Aorta (tissue), 5 donors: ENCODE measurements at regions of chr7 and their contacts with region 1.

Region 1: DNA sequence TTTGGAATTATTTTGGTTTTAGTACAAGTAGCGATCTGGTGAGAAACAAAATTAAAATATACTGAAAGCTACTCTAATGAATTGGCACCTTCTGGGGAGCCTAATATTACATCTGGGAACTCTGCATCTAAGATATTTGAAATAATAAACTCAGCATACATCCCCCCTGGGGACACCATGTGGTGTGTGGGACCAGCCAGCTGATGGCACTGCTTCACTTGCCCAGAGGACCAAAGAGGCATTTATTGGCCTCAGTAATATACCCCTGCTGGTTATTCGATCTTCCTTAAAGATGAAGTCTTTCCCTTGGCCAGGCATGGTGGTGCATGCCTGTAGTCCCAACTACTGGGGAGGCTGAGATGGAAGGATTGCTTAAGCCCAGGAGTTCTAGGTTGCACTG is 195.1 kb upstream of the AUTS2 start:
- DNase-seq: no peak
- ATAC-seq: no peak
- H3K4me3 ChIP-seq: no peak overlapping the region
- H3K27ac ChIP-seq: no peak overlapping the region
- H3K4me1 ChIP-seq: no peaks in the 10 kb centered on the region
- H3K27me3 ChIP-seq: no peaks in the 10 kb centered on the region

Region 2: DNA sequence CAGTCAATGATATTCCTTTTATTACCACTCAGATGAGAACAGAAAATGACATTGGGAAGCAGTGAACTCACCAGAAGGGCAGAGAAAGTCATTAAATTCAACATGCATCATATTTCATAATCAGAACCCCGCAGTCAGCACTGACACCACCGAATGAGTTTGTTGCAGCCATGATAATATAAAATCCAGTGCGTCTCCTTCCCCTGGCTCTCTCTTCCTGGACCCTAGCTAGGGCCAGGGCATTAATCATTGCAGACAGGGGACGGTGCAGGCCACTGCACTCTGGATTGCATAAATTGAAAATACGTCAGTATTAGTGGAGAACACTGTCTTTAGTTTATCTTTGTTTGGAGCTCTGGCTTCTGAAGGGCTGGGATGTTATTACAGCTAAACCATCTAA is 1475.0 kb before region 1 on chr7:
- intact Hi-C with region 1: loop called in 1 of 2 experiments (anchors 10 kb)
- DNase-seq: no peak
- ATAC-seq: no peak
- H3K4me3 ChIP-seq: no peak overlapping the region
- H3K27ac ChIP-seq: no peak overlapping the region
- H3K4me1 ChIP-seq: no peaks in the 10 kb centered on the region
- H3K27me3 ChIP-seq: no peaks in the 10 kb centered on the region